ENCODE measurements at regions of chr19 and their contacts with region 1.

Region 1: DNA sequence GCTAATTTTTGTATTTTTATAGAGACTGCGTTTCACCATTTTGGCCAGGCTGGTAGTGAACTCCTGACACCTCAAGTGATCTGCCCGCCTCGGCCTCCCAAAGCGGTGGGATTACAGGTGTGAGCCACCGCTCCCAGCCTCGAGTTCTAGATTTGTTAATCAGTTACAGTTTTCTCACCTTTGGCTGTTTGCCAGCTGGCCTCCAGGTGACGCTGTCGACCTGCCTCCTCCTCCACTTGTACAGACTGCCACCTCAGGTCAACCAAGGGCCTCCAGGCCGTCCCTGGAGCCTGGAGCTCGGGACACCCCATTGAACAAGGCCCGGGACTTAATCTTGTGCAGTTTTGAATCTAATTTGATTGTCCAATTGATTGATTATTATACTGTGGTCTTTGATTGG is 45.5 kb downstream of the IER2 start:
- DNase-seq: peak; percentile 71
- H3K4me3 Mint-ChIP-seq: no peak overlapping the region
- H3K27ac Mint-ChIP-seq: no peak overlapping the region
- H3K4me1 Mint-ChIP-seq: peaks cover 29% of the 10 kb centered on the region
- H3K27me3 Mint-ChIP-seq: no peaks in the 10 kb centered on the region

Region 2: DNA sequence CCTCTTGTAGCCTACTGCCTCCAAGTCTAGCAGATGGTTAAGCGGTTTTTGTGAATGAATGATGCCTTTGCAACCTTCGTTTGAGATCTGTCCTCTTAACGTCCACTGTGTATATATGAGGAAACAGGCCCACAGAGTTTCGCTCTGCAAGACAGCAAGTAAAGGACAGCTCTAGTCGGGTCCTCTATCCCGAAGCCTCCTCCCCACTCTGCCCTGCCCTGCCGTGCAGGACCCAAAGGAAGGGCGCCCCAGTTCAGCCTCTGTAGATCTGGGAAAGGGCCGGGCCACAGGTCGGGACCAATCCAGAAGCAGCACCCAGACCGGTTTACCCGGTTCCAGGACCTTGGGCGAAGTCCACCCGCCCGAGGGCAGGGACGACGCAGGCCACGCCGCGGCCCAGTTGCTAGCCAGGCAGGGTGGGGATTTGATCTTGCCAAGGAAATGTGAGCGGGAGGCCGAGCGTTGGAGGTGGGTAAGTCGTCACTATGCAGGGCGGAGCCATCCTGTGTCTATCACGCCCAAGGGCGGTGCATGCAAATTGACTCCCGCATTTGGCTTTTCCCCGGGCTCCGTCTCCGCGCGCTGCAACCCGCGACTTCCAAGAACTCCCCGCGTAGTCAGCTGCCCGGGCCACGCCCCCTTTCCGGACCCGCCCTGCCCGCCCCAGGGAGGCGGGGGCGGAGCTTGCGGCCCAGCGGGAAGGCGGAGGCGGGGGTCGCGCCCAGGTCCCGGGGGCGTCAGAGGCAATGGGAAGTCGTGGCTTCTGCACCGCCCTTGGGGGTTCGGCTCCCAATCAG is 33.0 kb before region 1 on chr19:
- CTCF ChIA-PET with region 1: interaction called, 36 read pairs
- POLR2A ChIA-PET with region 1: interaction called, 18 read pairs
- DNase-seq: peak; percentile 94
- H3K4me3 Mint-ChIP-seq: peak overlapping the region; percentile 89
- H3K27ac Mint-ChIP-seq: peak overlapping the region; percentile 99
- H3K4me1 Mint-ChIP-seq: peaks cover 77% of the 10 kb centered on the region
- H3K27me3 Mint-ChIP-seq: no peaks in the 10 kb centered on the region

Region 3: DNA sequence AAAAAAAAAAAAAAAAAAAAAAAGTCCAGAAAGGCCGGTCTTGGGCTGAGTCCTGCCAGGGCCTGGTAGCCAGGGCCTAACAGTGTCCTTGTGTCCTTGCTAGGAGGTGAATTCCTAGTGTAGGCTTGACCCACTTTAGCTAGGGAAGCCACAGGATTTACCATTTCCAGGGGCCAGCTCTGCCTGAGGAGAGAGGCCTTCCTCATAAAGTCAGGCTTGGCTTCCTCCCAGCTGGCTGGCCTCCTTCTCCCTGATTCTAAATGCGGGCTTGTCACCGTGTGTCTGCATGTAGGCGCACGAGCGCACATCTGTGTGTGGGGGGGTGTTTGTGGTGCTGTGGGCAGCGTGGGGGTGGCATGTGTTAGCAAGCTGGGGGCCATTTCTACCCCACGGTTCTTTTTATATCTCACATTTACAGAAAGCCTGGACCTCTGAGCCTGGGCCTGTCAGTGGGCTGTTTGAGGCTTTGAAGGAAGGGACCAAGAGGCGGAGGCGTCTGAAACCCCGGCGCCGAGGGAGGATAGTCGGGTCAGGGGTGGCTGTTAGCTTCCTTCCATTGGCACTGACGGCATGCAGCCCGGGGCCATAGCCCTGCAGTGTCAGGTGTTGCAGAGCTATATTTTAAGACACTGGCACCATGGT is 13.8 kb before region 1 on chr19:
- CTCF ChIA-PET with region 1: interaction called, 21 read pairs
- POLR2A ChIA-PET with region 1: interaction called, 3 read pairs
- DNase-seq: peak; percentile 20
- H3K4me3 Mint-ChIP-seq: no peak overlapping the region
- H3K27ac Mint-ChIP-seq: peak overlapping the region; percentile 34
- H3K4me1 Mint-ChIP-seq: peaks cover 21% of the 10 kb centered on the region
- H3K27me3 Mint-ChIP-seq: no peaks in the 10 kb centered on the region

Region 4: GRCh38 chr19:13262450-13262849 is 66.8 kb after region 1 on chr19:
- CTCF ChIA-PET with region 1: interaction called, 32 read pairs
- POLR2A ChIA-PET with region 1: no interaction called
- DNase-seq: peak; percentile 21
- H3K4me3 Mint-ChIP-seq: no peak overlapping the region
- H3K27ac Mint-ChIP-seq: no peak overlapping the region
- H3K4me1 Mint-ChIP-seq: peaks cover 20% of the 10 kb centered on the region
- H3K27me3 Mint-ChIP-seq: peaks cover 26% of the 10 kb centered on the region